Activated naive CD4-positive, alpha-beta T cell treated with anti-CD3 and anti-CD28 coated beads, Interleukin-2, amount 10 ng/mL, durations not matched to agents 7 days and 5 days (primary cell): ENCODE measurements at regions of chr14 and their contacts with region 1.

Region 1: DNA sequence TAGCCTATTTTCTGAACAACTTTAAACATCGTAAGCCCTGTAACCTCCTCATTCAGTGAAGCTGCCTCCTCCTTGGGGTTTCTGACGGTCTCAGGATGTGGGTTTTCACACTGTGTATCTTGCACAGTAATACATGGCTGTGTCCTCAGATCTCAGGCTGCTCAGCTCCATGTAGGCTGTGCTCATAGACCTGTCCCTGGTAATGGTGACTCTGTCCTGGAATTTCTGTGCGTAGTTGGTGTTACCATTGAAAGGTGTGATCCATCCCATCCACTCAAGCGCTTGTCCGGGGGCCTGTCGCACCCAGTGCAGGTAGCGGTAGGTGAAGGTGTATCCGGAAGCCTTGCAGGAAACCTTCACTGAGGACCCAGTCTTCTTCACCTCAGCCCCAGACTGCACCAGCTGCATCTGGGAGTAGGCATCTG is 980.5 kb downstream of the TMEM121 start:
- DNase-seq: peak; percentile 70
- H3K4me3 Mint-ChIP-seq: peak overlapping the region; percentile 63
- H3K27ac Mint-ChIP-seq: peak overlapping the region; percentile 93
- H3K4me1 Mint-ChIP-seq: peaks cover 61% of the 10 kb centered on the region
- H3K27me3 Mint-ChIP-seq: peaks cover 21% of the 10 kb centered on the region

Region 2: GRCh38 chr14:106491851-106492250 is 15.0 kb before region 1 on chr14:
- CTCF ChIA-PET with region 1: interaction called, 19 read pairs
- DNase-seq: peak; percentile 44
- H3K4me3 Mint-ChIP-seq: no peak overlapping the region
- H3K27ac Mint-ChIP-seq: no peak overlapping the region
- H3K4me1 Mint-ChIP-seq: peaks cover 11% of the 10 kb centered on the region
- H3K27me3 Mint-ChIP-seq: peaks cover 3% of the 10 kb centered on the region

Region 3: GRCh38 chr14:106556665-106557289 is 49.9 kb after region 1 on chr14:
- CTCF ChIA-PET with region 1: no interaction called
- DNase-seq: peak; percentile 81
- H3K4me3 Mint-ChIP-seq: no peak overlapping the region
- H3K27ac Mint-ChIP-seq: no peak overlapping the region
- H3K4me1 Mint-ChIP-seq: no peaks in the 10 kb centered on the region
- H3K27me3 Mint-ChIP-seq: peaks cover 30% of the 10 kb centered on the region

Region 4: DNA sequence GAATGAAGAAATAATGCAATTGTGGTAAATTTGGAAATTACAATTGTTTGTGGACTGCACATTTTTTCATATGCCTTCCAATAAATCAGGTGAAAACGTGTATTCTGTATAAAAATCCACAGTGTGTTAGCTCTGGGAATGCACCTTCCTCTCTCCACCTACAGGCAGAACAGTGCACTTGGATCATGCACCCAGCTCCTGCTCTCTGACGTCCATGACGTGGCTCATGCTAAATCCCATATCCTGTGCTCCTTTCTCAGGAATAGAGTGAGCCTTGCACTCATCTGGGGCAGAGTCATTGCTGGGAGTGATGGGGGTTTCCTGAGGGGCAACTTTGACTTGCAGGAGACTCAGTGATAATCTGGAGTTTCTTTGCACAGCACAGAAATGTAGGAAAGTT is 301.6 kb after region 1 on chr14:
- CTCF ChIA-PET with region 1: no interaction called
- DNase-seq: no peak
- H3K4me3 Mint-ChIP-seq: no peak overlapping the region
- H3K27ac Mint-ChIP-seq: no peak overlapping the region
- H3K4me1 Mint-ChIP-seq: peaks cover 25% of the 10 kb centered on the region
- H3K27me3 Mint-ChIP-seq: peaks cover 61% of the 10 kb centered on the region